RWPE1 (cell line): ENCODE measurements at regions of chr17 and their contacts with region 1.

Region 1: DNA sequence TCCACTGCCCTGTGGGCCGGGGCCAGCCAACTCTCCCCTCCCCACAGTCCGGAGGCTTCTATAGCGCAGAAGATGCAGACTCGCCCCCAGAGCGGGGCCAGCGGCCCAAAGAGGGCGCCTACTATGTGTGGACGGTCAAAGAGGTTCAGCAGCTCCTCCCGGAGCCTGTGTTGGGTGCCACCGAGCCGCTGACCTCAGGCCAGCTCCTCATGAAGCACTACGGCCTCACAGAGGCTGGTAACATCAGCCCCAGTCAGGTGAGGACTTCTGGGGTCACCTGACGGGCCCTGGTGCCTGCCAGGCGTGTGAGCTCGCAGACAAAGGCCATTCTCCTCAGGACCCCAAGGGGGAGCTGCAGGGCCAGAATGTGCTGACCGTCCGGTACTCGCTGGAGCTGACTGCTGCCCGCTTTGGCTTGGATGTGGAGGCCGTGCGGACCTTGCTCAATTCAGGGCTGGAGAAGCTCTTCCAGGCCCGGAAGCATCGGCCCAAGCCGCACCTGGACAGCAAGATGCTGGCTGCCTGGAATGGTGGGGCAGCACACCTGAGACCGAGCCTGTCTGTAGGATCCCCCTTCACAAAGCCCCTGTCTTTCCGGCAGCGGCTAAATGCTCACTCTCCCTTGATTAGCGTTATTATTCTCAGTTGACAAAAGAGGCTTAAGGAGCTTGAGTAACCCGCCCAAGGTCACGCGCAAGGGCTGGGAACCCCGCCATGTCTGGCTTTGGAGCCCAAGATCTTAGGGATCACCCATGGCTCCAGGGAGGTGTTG is 3.9 kb downstream of the SPATA20 start:
- DNase-seq: no peak
- H3K27ac ChIP-seq: peak overlapping the region; percentile 83; the same call in 1 of the 2 replicates
- CTCF ChIP-seq: peak; percentile 62

Region 2: GRCh38 chr17:50453901-50454300 is 96.9 kb before region 1 on chr17:
- CTCF ChIA-PET with region 1: interaction called, 12 read pairs
- POLR2A ChIA-PET with region 1: no interaction called
- DNase-seq: no peak
- H3K27ac ChIP-seq: no peak overlapping the region
- CTCF ChIP-seq: no peak

Region 3: DNA sequence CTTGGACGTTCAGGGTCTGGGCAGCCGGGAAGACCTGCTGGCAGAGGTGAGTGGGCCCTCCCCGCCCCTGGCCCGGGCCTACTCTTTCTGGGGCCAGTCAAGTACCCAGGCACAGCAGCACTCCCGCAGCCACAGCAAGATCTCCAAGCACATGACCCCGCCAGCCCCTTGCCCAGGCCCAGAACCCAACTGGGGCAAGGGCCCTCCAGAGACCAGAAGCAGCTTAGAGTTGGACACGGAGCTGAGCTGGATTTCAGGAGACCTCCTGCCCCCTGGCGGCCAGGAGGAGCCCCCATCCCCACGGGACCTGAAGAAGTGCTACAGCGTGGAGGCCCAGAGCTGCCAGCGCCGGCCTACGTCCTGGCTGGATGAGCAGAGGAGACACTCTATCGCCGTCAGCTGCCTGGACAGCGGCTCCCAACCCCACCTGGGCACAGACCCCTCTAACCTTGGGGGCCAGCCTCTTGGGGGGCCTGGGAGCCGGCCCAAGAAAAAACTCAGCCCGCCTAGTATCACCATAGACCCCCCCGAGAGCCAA is 75.3 kb after region 1 on chr17:
- CTCF ChIA-PET with region 1: interaction called, 11 read pairs
- POLR2A ChIA-PET with region 1: no interaction called
- DNase-seq: peak; percentile 60
- H3K27ac ChIP-seq: no peak overlapping the region
- CTCF ChIP-seq: peak; percentile 69